Activated naive CD4-positive, alpha-beta T cell treated with anti-CD3 and anti-CD28 coated beads, Interleukin-2, amount 10 ng/mL, durations not matched to agents 7 days and 5 days (primary cell): ENCODE measurements at regions of chr17 and their contacts with region 1.

Region 1: DNA sequence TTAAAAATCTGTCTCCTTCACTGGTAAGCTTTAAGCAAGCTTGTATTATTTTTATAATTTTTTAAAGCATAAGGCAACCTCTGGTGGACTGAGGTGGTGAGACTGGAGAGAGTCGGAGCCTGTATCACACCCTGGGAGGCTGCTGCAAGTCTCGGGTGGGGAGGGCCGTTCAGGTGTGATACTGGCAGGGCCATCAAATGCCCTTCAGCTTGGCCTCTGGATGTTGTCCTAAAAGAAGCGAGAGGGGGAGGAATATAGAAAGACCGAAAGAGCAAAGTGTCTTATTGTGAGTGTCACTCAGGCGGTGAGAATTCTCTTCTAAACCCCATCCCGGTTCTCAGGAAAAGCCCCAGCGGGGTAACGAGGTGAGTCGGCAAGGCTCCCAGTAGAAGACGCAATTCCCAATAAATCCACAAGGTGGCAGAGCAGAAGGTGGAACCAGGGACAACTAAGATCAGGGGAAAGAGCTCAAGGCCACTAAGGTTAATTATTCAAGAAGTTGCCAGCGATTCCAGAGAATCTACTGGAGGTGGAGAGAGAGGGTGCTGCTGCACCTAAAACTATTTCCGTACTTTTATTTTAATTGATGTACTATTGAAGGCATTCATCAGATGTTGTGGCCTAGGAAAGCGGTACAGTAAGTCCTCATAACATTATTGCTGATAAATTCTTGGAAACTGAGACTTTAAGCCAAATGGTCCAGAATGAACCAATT is 14.1 kb downstream of the C17orf67 start:
- DNase-seq: peak; percentile 80
- H3K4me3 Mint-ChIP-seq: no peak overlapping the region
- H3K27ac Mint-ChIP-seq: no peak overlapping the region
- H3K4me1 Mint-ChIP-seq: peaks cover 5% of the 10 kb centered on the region
- H3K27me3 Mint-ChIP-seq: no peaks in the 10 kb centered on the region

Region 2: GRCh38 chr17:56602292-56603130 is 217.1 kb before region 1 on chr17:
- CTCF ChIA-PET with region 1: no interaction called
- DNase-seq: peak; percentile 66
- H3K4me3 Mint-ChIP-seq: no peak overlapping the region
- H3K27ac Mint-ChIP-seq: peak overlapping the region; percentile 91
- H3K4me1 Mint-ChIP-seq: peaks cover 66% of the 10 kb centered on the region
- H3K27me3 Mint-ChIP-seq: peaks cover 13% of the 10 kb centered on the region

Region 3: GRCh38 chr17:56773124-56773523 is 46.5 kb before region 1 on chr17:
- CTCF ChIA-PET with region 1: no interaction called
- DNase-seq: no peak
- H3K4me3 Mint-ChIP-seq: no peak overlapping the region
- H3K27ac Mint-ChIP-seq: no peak overlapping the region
- H3K4me1 Mint-ChIP-seq: peaks cover 2% of the 10 kb centered on the region
- H3K27me3 Mint-ChIP-seq: no peaks in the 10 kb centered on the region

Region 4: GRCh38 chr17:56833809-56834379 is 14.3 kb after region 1 on chr17 and contains the starts of genes C17orf67 and DGKE:
- CTCF ChIA-PET with region 1: interaction called, 19 read pairs
- DNase-seq: peak; percentile 99
- H3K4me3 Mint-ChIP-seq: peak within 1 kb of the TSS; percentile 95
- H3K27ac Mint-ChIP-seq: peak within 1 kb of the TSS; percentile 96
- H3K4me1 Mint-ChIP-seq: peaks cover 65% of the 10 kb centered on the region
- H3K27me3 Mint-ChIP-seq: no peaks in the 10 kb centered on the region